Caco-2 (cell line): ENCODE measurements at regions of chr15 and their contacts with region 1.

Region 1: GRCh38 chr15:70812827-70813364 is 41.1 kb downstream of the LARP6 start:
- DNase-seq: no peak
- H3K4me3 ChIP-seq: no peak overlapping the region
- H3K4me3 Mint-ChIP-seq: peak overlapping the region; percentile 72
- H3K27ac Mint-ChIP-seq: no peak overlapping the region
- H3K4me1 ChIP-seq: no peaks in the 10 kb centered on the region
- H3K4me1 Mint-ChIP-seq: peaks cover 25% of the 10 kb centered on the region
- H3K27me3 ChIP-seq: no peaks in the 10 kb centered on the region
- H3K27me3 Mint-ChIP-seq: no peaks in the 10 kb centered on the region
- CTCF ChIP-seq: no peak

Region 2: DNA sequence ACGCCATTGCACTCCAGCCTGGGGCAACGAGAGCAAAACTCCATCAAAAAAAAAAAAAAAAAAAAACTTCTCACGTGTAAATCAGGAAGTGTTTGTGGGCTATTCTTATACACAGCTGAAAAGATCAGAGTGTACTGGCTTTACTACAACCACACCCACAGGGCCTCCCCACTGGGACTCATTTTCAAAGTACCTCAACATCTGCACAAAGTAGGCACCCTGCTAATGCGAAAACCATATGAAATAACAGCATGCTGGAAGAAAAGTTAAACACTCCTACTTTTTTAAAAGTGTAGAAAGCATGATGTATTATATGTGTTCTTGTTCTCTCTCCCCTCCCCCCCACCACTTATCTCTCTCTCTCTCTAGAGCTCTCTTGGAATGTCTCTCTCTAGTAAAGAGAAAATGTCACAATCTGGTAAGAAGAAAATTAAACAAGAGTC is 60.7 kb before region 1 on chr15:
- CTCF ChIA-PET with region 1: no interaction called
- POLR2A ChIA-PET with region 1: no interaction called
- intact Hi-C with region 1: loop called (anchors 2 kb)
- DNase-seq: no peak
- H3K4me3 ChIP-seq: no peak overlapping the region
- H3K4me3 Mint-ChIP-seq: no peak overlapping the region
- H3K27ac Mint-ChIP-seq: no peak overlapping the region
- H3K4me1 ChIP-seq: peaks cover 13% of the 10 kb centered on the region; the same call in 1 of the 2 replicates
- H3K4me1 Mint-ChIP-seq: peaks cover 18% of the 10 kb centered on the region
- H3K27me3 ChIP-seq: no peaks in the 10 kb centered on the region
- H3K27me3 Mint-ChIP-seq: no peaks in the 10 kb centered on the region
- CTCF ChIP-seq: no peak

Region 3: GRCh38 chr15:70880781-70881180 is 67.9 kb after region 1 on chr15:
- CTCF ChIA-PET with region 1: no interaction called
- POLR2A ChIA-PET with region 1: no interaction called
- intact Hi-C with region 1: no loop called
- DNase-seq: no peak
- H3K4me3 ChIP-seq: no peak overlapping the region
- H3K4me3 Mint-ChIP-seq: no peak overlapping the region
- H3K27ac Mint-ChIP-seq: no peak overlapping the region
- H3K4me1 ChIP-seq: no peaks in the 10 kb centered on the region; the same call in 1 of the 2 replicates
- H3K4me1 Mint-ChIP-seq: no peaks in the 10 kb centered on the region
- H3K27me3 ChIP-seq: no peaks in the 10 kb centered on the region
- H3K27me3 Mint-ChIP-seq: peaks cover 2% of the 10 kb centered on the region
- CTCF ChIP-seq: no peak

Region 4: GRCh38 chr15:71003319-71003718 is 190.4 kb after region 1 on chr15:
- CTCF ChIA-PET with region 1: no interaction called
- POLR2A ChIA-PET with region 1: no interaction called
- intact Hi-C with region 1: no loop called
- DNase-seq: no peak
- H3K4me3 ChIP-seq: no peak overlapping the region
- H3K4me3 Mint-ChIP-seq: no peak overlapping the region
- H3K27ac Mint-ChIP-seq: no peak overlapping the region
- H3K4me1 ChIP-seq: no peaks in the 10 kb centered on the region
- H3K4me1 Mint-ChIP-seq: no peaks in the 10 kb centered on the region
- H3K27me3 ChIP-seq: no peaks in the 10 kb centered on the region
- H3K27me3 Mint-ChIP-seq: peaks cover 4% of the 10 kb centered on the region
- CTCF ChIP-seq: no peak